ENCODE measurements at regions of chr3 and their contacts with region 1.

Region 1: GRCh38 chr3:183766745-183767606 is 58.4 kb downstream of the MAP6D1 start:
- DNase-seq: peak; percentile 85
- ATAC-seq: peak; percentile 93
- H3K4me3 Mint-ChIP-seq: no peak overlapping the region
- H3K27ac Mint-ChIP-seq: peak overlapping the region; percentile 34
- H3K4me1 Mint-ChIP-seq: peaks cover 19% of the 10 kb centered on the region
- H3K27me3 Mint-ChIP-seq: no peaks in the 10 kb centered on the region

Region 2: GRCh38 chr3:183468424-183468823 is 298.6 kb before region 1 on chr3:
- CTCF ChIA-PET with region 1: interaction called, 15 read pairs
- DNase-seq: no peak
- ATAC-seq: no peak
- H3K4me3 Mint-ChIP-seq: no peak overlapping the region
- H3K27ac Mint-ChIP-seq: peak overlapping the region; percentile 73
- H3K4me1 Mint-ChIP-seq: peaks cover 18% of the 10 kb centered on the region
- H3K27me3 Mint-ChIP-seq: peaks cover 5% of the 10 kb centered on the region

Region 3: GRCh38 chr3:183477801-183478456 is 289.0 kb before region 1 on chr3:
- CTCF ChIA-PET with region 1: interaction called, 13 read pairs
- DNase-seq: peak; percentile 19
- ATAC-seq: no peak
- H3K4me3 Mint-ChIP-seq: no peak overlapping the region
- H3K27ac Mint-ChIP-seq: no peak overlapping the region
- H3K4me1 Mint-ChIP-seq: peaks cover 10% of the 10 kb centered on the region
- H3K27me3 Mint-ChIP-seq: peaks cover 2% of the 10 kb centered on the region